ENCODE measurements at regions of chr19 and their contacts with region 1.

Region 1: GRCh38 chr19:55503502-55504251 is 15.4 kb downstream of the SSC5D start:
- DNase-seq: peak; percentile 62 to 96
- H3K4me3 ChIP-seq: peak overlapping the region; percentile 27; the same call in 1 of the 2 replicates
- H3K27ac ChIP-seq: no peak overlapping the region
- H3K4me1 ChIP-seq: no peaks in the 10 kb centered on the region
- H3K27me3 ChIP-seq: peaks cover 27% of the 10 kb centered on the region
- CTCF ChIP-seq: peak; percentile 99

Region 2: DNA sequence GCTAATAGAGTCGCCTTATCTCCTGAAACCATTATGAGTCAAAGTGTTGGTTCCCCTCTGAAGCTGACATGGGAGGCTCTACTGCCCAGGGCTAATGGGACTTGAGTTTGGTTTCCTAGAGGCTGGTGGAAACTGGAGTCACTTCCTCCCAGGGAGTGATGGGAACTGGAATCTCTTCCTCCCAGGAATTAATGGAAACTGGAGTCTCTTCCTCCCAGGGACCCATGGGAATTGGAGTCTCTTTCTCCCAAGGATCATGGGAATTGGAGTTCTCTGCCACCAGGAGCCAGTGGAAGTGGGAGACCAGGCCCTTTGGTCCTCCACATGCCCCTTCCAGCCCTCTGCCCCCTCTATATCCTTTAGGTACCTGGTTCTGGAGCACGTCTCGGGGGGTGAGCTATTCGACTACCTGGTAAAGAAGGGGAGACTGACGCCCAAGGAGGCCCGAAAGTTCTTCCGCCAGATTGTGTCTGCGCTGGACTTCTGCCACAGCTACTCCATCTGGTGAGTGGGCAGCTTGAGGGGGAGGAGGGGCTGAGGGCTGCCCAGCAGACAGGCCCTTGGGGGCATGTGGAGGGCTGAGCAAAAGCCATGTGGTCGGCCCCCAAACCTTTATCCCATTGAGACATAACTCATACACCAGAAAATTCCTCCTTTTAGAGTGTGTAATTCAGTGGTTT is 214.4 kb before region 1 on chr19:
- CTCF ChIA-PET with region 1: no interaction called
- POLR2A ChIA-PET with region 1: no interaction called
- intact Hi-C with region 1: loop called (anchors 2 kb)
- DNase-seq: no peak
- H3K4me3 ChIP-seq: no peak overlapping the region
- H3K27ac ChIP-seq: no peak overlapping the region
- H3K4me1 ChIP-seq: no peaks in the 10 kb centered on the region
- H3K27me3 ChIP-seq: no peaks in the 10 kb centered on the region
- CTCF ChIP-seq: no peak

Region 3: GRCh38 chr19:55418185-55418584 is 85.5 kb before region 1 on chr19:
- CTCF ChIA-PET with region 1: interaction called, 6 read pairs
- POLR2A ChIA-PET with region 1: no interaction called
- intact Hi-C with region 1: loop called (anchors 5 kb)
- DNase-seq: peak; percentile 74 to 79
- H3K4me3 ChIP-seq: no peak overlapping the region
- H3K27ac ChIP-seq: no peak overlapping the region
- H3K4me1 ChIP-seq: no peaks in the 10 kb centered on the region
- H3K27me3 ChIP-seq: peaks cover 33% of the 10 kb centered on the region
- CTCF ChIP-seq: peak; percentile 94

Region 4: GRCh38 chr19:55467236-55468053 is 36.2 kb before region 1 on chr19:
- CTCF ChIA-PET with region 1: interaction called, 13 read pairs
- POLR2A ChIA-PET with region 1: interaction called, 5 read pairs
- intact Hi-C with region 1: loop called (anchors 5 kb)
- DNase-seq: peak in 1 of 2 experiments; percentile 77
- H3K4me3 ChIP-seq: no peak overlapping the region
- H3K27ac ChIP-seq: no peak overlapping the region
- H3K4me1 ChIP-seq: peaks cover 20% of the 10 kb centered on the region
- H3K27me3 ChIP-seq: no peaks in the 10 kb centered on the region
- CTCF ChIP-seq: peak; percentile 100

Region 5: DNA sequence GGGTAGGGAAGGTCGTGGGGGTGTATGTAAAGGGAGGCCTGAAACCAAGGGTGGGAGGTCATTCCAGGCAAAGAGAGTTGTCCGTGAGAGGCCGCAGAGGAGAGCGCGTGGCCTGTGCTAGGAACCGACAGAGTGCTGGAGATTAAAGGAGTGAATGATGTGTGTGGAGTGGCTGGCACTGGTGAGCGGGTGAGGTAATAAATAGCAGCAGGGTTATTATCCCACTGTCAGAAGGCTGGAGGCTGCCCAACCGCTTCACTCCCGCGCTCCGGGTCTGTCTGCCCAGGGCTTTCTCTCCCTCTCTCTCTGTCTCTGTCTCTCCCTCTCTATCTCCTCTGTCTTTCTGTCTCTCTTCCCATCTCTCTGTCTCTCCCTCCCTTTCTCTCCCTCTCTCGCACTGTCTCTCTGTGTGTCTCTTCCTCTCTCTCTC is 59.6 kb after region 1 on chr19:
- CTCF ChIA-PET with region 1: no interaction called
- POLR2A ChIA-PET with region 1: no interaction called
- intact Hi-C with region 1: no loop called
- DNase-seq: no peak
- H3K4me3 ChIP-seq: no peak overlapping the region
- H3K27ac ChIP-seq: no peak overlapping the region
- H3K4me1 ChIP-seq: no peaks in the 10 kb centered on the region
- H3K27me3 ChIP-seq: no peaks in the 10 kb centered on the region
- CTCF ChIP-seq: no peak

Region 6: DNA sequence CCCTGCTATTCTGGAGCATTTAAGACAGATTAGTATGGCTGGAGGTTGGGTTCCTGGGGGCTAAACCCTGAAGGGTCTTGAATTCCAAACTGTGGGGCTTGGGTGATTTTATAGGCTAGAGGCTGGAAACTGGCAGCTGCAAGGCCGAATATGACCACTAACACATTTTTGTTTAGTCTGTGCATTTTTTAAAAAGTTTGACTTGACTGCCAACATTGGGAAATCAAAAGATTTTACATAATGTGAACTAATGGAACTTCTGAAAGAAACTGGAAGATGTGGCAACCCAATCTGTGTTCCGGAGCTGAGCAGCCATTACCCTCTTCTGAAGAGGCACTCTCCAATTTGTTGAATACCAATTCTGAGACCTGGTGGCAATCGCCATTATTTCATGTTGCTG is 115.6 kb after region 1 on chr19:
- CTCF ChIA-PET with region 1: interaction called, 14 read pairs
- POLR2A ChIA-PET with region 1: interaction called, 6 read pairs
- intact Hi-C with region 1: no loop called
- DNase-seq: no peak
- H3K4me3 ChIP-seq: no peak overlapping the region
- H3K27ac ChIP-seq: no peak overlapping the region
- H3K4me1 ChIP-seq: peaks cover 5% of the 10 kb centered on the region; the same call in 1 of the 2 replicates
- H3K27me3 ChIP-seq: no peaks in the 10 kb centered on the region
- CTCF ChIP-seq: no peak

Measured in PC-9 (cell line).